ENCODE measurements at regions of chr15 and their contacts with region 1.

Region 1: DNA sequence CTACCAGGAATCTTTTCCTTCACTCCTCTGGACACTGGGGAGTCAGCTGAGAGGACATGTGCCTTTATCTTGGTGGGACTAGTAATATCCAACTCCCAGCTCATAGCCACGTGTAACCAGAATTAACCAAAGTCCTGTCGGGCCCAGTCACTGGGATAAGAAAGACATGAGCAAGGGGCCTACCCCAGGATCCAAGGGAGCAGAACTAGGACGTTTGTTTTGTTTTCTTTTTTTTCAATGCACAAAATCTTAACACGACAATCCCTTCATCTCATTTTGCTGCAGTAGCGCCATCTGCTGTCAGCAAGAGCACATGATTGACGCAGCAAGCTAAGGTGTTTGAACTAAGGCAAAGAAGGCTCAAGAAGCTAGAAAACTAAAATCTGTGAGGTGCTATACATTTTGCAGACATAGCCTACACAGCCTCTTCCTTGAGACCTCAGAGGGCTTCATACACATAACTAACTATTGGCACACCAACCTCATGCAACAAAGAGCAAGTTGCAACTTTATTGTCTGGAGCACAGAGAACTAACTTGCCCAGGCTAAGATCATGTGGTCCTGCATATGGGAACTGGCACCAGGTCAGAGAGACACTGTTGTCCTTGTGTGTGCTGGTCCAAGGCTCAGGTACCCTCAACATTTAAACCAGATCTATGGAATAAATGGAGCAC is 43.6 kb downstream of the RLBP1 start:
- DNase-seq: peak; percentile 74
- H3K4me3 Mint-ChIP-seq: no peak overlapping the region
- H3K27ac Mint-ChIP-seq: no peak overlapping the region
- H3K4me1 Mint-ChIP-seq: peaks cover 7% of the 10 kb centered on the region
- H3K27me3 Mint-ChIP-seq: no peaks in the 10 kb centered on the region
- CTCF ChIP-seq: peak; percentile 66

Region 2: GRCh38 chr15:88897456-88898194 is 280.1 kb before region 1 on chr15:
- CTCF ChIA-PET with region 1: interaction called, 37 read pairs
- POLR2A ChIA-PET with region 1: no interaction called
- intact Hi-C with region 1: loop called (anchors 2 kb)
- DNase-seq: peak; percentile 79
- H3K4me3 Mint-ChIP-seq: no peak overlapping the region
- H3K27ac Mint-ChIP-seq: peak overlapping the region; percentile 46
- H3K4me1 Mint-ChIP-seq: peaks cover 19% of the 10 kb centered on the region
- H3K27me3 Mint-ChIP-seq: no peaks in the 10 kb centered on the region
- CTCF ChIP-seq: peak; percentile 45

Region 3: GRCh38 chr15:88987934-88988671 is 189.7 kb before region 1 on chr15:
- CTCF ChIA-PET with region 1: no interaction called
- POLR2A ChIA-PET with region 1: no interaction called
- intact Hi-C with region 1: no loop called
- DNase-seq: no peak
- H3K4me3 Mint-ChIP-seq: no peak overlapping the region
- H3K27ac Mint-ChIP-seq: no peak overlapping the region
- H3K4me1 Mint-ChIP-seq: peaks cover 7% of the 10 kb centered on the region
- H3K27me3 Mint-ChIP-seq: no peaks in the 10 kb centered on the region
- CTCF ChIP-seq: no peak

Region 4: GRCh38 chr15:89017370-89018066 is 160.3 kb before region 1 on chr15:
- CTCF ChIA-PET with region 1: interaction called, 10 read pairs
- POLR2A ChIA-PET with region 1: no interaction called
- intact Hi-C with region 1: no loop called
- DNase-seq: peak; percentile 88
- H3K4me3 Mint-ChIP-seq: peak overlapping the region; percentile 57
- H3K27ac Mint-ChIP-seq: peak overlapping the region; percentile 72
- H3K4me1 Mint-ChIP-seq: peaks cover 22% of the 10 kb centered on the region
- H3K27me3 Mint-ChIP-seq: no peaks in the 10 kb centered on the region
- CTCF ChIP-seq: peak; percentile 76

Region 5: DNA sequence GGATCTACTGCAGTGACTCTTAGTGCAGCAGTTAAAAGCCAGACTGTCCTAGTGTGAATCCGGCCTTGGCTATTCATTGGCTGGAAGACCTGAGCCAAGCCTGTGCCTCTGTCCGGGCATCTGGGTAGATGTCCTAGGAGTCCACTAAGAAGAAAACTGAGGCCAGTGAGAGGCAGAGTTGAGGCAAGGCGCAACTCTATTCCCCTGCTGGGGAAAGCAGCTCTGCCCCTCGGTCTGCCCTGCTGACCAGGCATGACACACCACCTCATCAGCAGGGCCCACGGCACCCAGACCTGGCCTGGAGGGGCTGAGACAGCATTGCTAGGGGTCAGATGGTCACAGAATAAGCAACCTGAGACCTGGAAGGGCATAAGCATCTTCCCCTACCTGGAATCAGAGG is 136.3 kb before region 1 on chr15:
- CTCF ChIA-PET with region 1: interaction called, 11 read pairs
- POLR2A ChIA-PET with region 1: no interaction called
- intact Hi-C with region 1: no loop called
- DNase-seq: no peak
- H3K4me3 Mint-ChIP-seq: no peak overlapping the region
- H3K27ac Mint-ChIP-seq: no peak overlapping the region
- H3K4me1 Mint-ChIP-seq: no peaks in the 10 kb centered on the region
- H3K27me3 Mint-ChIP-seq: peaks cover 25% of the 10 kb centered on the region
- CTCF ChIP-seq: no peak

Region 6: GRCh38 chr15:89119489-89120123 is 58.2 kb before region 1 on chr15:
- CTCF ChIA-PET with region 1: interaction called, 10 read pairs
- POLR2A ChIA-PET with region 1: interaction called, 3 read pairs
- intact Hi-C with region 1: no loop called
- DNase-seq: peak; percentile 66
- H3K4me3 Mint-ChIP-seq: no peak overlapping the region
- H3K27ac Mint-ChIP-seq: peak overlapping the region; percentile 91
- H3K4me1 Mint-ChIP-seq: peaks cover 47% of the 10 kb centered on the region
- H3K27me3 Mint-ChIP-seq: no peaks in the 10 kb centered on the region
- CTCF ChIP-seq: no peak

Region 7: GRCh38 chr15:89164712-89165211 is 13.0 kb before region 1 on chr15:
- CTCF ChIA-PET with region 1: interaction called, 54 read pairs
- POLR2A ChIA-PET with region 1: interaction called, 3 read pairs
- intact Hi-C with region 1: no loop called
- DNase-seq: no peak
- H3K4me3 Mint-ChIP-seq: no peak overlapping the region
- H3K27ac Mint-ChIP-seq: no peak overlapping the region
- H3K4me1 Mint-ChIP-seq: peaks cover 12% of the 10 kb centered on the region
- H3K27me3 Mint-ChIP-seq: no peaks in the 10 kb centered on the region
- CTCF ChIP-seq: no peak